PC-9 (cell line): ENCODE measurements at regions of chr12 and their contacts with region 1.

Region 1: DNA sequence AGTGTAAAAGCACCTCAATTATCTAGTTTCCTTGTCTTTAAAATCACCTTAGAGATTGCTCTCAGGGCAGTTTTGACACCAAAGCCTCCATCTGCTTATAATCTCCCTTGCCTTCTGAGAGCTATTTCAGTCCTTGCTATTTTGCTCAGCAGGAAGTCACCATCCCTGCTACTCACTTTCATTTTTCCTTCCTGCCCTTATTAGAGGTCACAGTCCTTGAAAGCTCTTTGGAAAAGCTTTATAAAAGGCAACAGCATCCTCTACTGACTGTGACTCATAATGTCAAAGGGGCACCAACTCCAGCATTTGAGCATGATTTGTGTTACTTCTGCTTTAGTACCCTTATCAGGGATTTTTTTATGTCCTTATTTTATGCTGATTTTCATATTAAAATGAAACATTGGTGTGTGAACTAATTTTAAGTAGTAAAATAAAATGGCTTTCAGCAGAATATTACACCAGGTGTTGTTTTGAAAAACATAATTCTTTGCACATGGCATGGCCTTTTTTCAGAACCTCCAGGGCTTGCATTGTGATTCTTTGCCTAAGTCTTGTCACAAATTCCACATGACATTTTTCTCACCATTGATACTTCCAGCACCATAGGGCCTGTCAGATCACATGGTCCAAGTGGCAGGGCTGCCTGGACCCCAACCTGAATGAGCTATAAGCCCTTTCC is 213.0 kb downstream of the ADAMTS20 start:
- DNase-seq: peak; percentile 9 to 52
- H3K4me3 ChIP-seq: no peak overlapping the region
- H3K27ac ChIP-seq: no peak overlapping the region
- H3K4me1 ChIP-seq: no peaks in the 10 kb centered on the region
- H3K27me3 ChIP-seq: no peaks in the 10 kb centered on the region
- CTCF ChIP-seq: peak; percentile 54; the same call in 1 of the 2 replicates

Region 2: DNA sequence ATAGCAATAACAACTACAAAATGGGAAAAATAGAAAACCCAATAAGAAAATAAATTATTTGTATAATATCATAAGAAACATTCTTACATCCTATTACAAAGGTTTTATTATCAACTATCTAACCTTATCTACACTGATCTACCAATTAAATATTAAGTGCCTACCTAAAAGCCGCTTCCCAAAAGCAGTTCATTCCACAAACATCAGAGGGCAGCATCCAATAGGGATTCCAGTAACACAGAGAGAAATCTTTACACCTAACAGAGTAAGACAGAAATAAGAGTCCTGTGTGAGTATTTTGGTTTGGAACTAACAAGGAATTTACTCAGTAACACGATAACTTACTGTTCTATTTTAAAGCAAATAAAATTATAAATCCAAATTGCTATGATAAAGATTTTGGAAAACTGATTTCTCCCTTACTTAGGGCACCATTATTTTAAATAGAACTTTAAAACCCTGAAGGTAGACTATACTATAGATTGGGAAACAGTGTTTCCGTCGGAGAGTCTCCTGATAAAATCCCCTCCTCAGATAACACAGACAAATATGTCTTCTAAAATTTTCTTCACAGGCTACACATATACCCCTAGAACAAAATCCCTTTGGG is 1209.3 kb before region 1 on chr12:
- CTCF ChIA-PET with region 1: no interaction called
- POLR2A ChIA-PET with region 1: no interaction called
- intact Hi-C with region 1: loop called (anchors 5 kb)
- DNase-seq: peak; percentile 41 to 46
- H3K4me3 ChIP-seq: no peak overlapping the region
- H3K27ac ChIP-seq: peak overlapping the region; percentile 64
- H3K4me1 ChIP-seq: peaks cover 21% of the 10 kb centered on the region
- H3K27me3 ChIP-seq: no peaks in the 10 kb centered on the region
- CTCF ChIP-seq: peak; percentile 88

Region 3: GRCh38 chr12:42372154-42372791 is 966.7 kb before region 1 on chr12:
- CTCF ChIA-PET with region 1: no interaction called
- POLR2A ChIA-PET with region 1: no interaction called
- intact Hi-C with region 1: loop called (anchors 10 kb)
- DNase-seq: peak; percentile 4 to 43
- H3K4me3 ChIP-seq: no peak overlapping the region
- H3K27ac ChIP-seq: no peak overlapping the region
- H3K4me1 ChIP-seq: no peaks in the 10 kb centered on the region
- H3K27me3 ChIP-seq: no peaks in the 10 kb centered on the region
- CTCF ChIP-seq: peak; percentile 79

Region 4: DNA sequence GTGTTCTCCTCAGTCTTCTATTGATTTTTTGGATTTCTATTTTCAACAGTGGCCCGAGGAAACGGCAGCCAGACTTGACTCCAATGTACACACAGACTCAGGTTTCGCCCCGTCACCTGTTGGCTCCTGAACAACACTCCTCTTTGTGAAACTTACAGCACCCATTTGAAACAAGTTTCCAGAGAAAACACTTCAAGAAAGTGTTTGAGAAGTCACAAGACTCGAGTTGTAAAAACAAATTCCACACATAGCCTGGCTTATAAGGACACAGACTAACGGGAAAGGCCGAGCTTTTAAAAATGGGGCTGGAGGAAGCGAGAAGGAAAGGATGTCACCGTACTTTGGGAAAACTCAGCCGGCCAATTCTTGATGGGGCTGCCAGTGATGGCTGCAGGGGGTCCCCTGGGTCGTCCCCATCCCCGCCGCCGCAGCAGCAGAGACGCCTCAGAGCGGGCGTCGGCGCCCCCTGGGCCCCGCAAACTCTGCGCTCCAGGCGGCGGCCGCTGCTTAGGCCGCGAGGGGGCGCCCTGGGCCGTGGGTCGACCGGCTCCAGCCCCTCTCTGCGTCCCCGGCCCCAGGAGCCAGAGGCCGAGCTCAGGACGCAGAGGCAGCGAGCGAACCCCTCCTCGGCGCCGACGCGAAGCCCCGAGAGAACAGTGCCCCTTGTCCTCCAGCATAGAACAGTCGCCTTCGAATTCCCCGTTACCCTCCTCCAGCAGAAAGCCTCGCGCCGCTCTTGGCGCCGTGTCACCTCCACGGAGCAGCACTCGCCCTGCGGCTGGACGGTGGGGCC is 856.3 kb before region 1 on chr12:
- CTCF ChIA-PET with region 1: no interaction called
- POLR2A ChIA-PET with region 1: no interaction called
- intact Hi-C with region 1: loop called (anchors 1 kb)
- DNase-seq: peak in 1 of 2 experiments; percentile 76
- H3K4me3 ChIP-seq: peak overlapping the region; percentile 92
- H3K27ac ChIP-seq: no peak overlapping the region
- H3K4me1 ChIP-seq: peaks cover 8% of the 10 kb centered on the region; the same call in 1 of the 2 replicates
- H3K27me3 ChIP-seq: no peaks in the 10 kb centered on the region
- CTCF ChIP-seq: peak; percentile 85

Region 5: DNA sequence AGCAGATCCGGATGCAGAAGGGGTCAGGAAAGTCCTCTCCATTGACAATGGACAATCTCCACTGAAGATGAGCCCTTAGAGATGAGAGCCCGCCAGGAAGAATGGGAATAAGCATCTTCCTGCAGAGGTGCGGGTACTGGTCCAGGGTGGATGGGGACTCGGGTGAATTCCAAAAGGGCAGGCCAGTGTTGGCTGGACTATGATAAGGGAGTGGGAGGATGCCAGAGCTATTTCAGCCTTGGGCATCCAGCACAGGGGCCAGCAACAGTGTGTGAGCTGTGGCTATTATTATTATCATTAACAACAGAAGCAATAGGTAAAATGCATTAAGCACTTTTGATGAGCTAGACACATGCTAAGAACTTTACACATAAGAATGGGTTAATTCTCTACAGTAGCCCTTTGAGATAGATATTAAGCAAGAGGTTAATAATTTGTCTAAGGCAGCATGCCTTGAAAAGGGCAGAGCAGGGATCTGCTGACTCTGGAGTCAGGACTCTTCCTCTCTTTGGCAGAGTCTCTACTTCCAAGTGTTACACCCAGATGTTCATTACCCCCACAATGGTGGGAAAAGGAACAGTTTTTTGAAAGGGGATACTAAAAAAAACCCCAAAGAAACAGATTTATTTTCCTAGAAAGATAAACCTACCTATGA is 804.7 kb before region 1 on chr12:
- CTCF ChIA-PET with region 1: no interaction called
- POLR2A ChIA-PET with region 1: no interaction called
- intact Hi-C with region 1: no loop called
- DNase-seq: no peak
- H3K4me3 ChIP-seq: no peak overlapping the region
- H3K27ac ChIP-seq: no peak overlapping the region
- H3K4me1 ChIP-seq: no peaks in the 10 kb centered on the region
- H3K27me3 ChIP-seq: no peaks in the 10 kb centered on the region
- CTCF ChIP-seq: no peak

Region 6: DNA sequence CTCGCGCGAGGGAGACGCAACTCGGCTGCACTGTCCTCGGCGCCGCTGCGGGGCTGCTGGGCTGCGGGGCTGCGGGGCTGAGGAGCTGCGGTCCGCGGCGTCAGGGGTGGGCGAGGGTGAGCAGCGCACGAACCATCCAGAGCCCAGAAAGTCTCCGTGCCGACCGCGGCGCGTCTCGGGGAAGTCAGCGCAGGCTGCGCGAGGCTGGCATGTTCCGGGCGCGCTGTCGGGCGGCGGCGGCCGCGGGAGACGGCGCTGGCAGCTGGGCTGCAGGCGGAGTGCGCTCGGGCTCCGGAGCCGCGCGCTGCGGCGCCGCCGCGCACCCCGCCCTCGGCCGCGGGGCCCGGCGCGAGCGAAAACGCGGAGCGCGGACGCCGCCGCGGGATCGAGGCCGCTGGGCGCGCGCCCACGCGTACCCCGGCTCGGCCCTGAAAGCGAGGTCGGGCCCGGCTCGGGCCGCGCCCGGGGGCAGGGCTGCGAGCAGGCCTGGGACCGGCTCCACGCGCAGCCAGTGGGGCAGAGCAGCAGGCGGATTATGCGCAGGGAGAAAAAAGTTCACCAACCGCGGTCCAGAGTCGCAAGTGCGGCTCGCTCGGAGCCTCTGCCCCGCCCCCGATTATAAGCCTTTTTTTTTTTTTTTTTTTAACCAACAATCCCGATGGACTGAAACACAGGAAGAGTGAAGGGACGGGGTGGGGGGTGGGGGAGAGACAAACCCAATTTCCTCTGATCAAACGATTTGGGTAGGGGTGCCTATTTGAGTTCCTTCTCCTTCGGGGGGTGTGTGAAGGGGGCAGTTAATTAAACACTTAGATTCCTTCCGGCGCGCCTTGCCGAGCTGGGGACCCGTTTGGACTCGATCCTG is 749.3 kb before region 1 on chr12 and contains the start of gene PRICKLE1:
- CTCF ChIA-PET with region 1: no interaction called
- POLR2A ChIA-PET with region 1: no interaction called
- intact Hi-C with region 1: loop called (anchors 5 kb)
- DNase-seq: peak; percentile 36 to 56
- H3K4me3 ChIP-seq: peak within 1 kb of the TSS; percentile 89
- H3K27ac ChIP-seq: no peak within 1 kb of the TSS
- H3K4me1 ChIP-seq: peaks cover 13% of the 10 kb centered on the region; the same call in 1 of the 2 replicates
- H3K27me3 ChIP-seq: no peaks in the 10 kb centered on the region
- CTCF ChIP-seq: no peak
- total RNA-seq, gene PRICKLE1: 6.7 and 7.0 TPM in 2 replicates

Region 7: DNA sequence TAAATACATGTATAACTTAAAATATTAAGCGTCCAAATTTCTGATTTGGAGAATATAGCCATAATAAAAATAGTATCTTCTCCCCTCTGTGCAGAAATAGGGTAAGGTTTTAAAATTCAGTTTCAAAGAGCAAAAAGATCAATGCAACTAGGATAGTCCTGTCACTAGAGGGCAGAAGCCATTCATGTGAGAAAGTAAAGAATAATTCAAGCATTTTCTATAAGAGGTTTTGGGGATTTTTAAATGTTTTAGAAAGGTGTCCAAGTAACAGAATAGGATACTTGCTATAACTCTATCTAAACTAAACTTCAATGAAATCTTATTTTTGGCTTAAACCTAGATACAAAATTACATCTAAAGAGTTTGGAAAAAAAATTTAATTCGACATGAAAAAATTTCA is 162.7 kb after region 1 on chr12:
- CTCF ChIA-PET with region 1: interaction called, 14 read pairs
- POLR2A ChIA-PET with region 1: no interaction called
- intact Hi-C with region 1: no loop called
- DNase-seq: no peak
- H3K4me3 ChIP-seq: no peak overlapping the region
- H3K27ac ChIP-seq: no peak overlapping the region
- H3K4me1 ChIP-seq: no peaks in the 10 kb centered on the region
- H3K27me3 ChIP-seq: no peaks in the 10 kb centered on the region
- CTCF ChIP-seq: peak; percentile 69